ENCODE measurements at regions of chr3 and their contacts with region 1.

Region 1: DNA sequence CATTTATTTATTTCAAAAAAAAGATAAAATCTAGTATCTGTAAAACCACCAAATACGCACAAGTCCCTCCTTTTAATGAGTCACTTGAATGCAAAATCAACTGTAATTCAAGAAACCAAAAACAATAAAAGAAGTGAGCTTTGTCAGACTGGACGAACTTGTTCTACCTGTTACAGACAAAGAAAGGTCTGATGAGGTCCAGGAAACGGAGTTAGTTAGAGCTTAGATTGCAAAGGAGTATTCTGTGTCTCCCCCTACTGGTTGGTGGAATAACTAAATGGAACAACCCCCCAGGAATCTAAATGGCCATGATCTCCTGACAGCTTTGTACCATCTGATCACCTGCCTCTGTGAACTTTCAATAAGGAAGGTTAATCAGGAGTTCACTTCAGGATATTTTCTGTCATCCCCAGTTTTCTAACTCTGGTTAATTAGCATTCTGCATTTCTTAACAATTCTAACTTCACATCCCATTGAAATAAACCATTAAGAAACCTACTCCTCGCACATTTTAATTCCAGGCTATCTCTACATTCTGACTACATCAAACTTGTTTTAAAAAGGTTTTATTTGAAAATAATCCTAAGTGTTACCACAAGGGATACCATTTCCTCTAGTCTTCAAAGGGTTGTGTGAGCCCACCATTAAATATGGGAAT is 333.0 kb upstream of the SATB1 start:
- DNase-seq: peak; percentile 69
- ATAC-seq: peak; percentile 94
- H3K4me3 Mint-ChIP-seq: no peak overlapping the region
- H3K27ac Mint-ChIP-seq: peak overlapping the region; percentile 44
- H3K4me1 Mint-ChIP-seq: peaks cover 41% of the 10 kb centered on the region
- H3K27me3 Mint-ChIP-seq: no peaks in the 10 kb centered on the region

Region 2: DNA sequence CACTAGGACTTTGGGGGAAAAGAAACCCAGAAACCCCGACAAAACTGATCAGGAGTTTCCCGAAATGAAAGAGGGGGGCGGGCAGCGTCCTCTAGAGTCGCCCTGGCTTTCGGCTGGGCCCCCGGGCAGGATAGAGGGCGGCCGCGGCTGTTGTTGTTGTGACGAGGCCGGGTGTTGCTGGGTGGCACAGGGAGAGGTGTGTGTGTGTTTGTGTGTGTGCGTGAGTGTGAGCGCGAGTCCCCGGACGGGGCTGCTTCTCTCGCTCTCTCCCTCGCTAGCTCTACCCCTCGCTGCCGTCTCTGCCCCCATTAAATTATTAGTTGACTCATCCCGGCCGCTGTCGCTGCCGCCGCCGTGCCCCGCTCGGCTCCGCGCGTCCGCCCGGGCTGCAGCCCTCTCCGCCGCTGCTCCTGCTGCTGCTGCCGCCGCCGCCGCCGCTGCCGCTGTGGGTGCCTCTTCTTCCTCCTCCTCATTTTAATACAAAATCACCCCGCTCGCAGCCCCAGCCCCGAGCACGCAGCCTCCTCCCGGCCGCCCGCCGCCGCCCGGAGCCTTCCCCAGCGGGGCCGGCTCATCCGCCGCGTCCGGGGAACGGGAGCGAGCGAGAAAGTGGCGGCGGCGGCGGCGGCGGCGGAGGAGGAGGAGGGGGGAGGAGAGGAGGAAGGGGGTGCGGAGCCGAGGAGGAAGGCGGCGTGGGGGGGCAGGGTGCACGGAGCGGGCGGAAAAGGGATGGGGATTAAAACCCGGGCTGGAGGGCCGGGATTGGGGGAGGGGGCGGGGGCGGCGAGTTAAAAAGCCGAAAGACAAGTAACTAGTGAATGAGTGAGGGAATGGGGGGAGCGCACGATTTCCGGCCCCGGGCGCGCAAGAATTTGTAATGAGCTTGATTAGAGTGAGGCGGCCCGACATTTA is 333.2 kb before region 1 on chr3 and contains the start of gene SATB1:
- CTCF ChIA-PET with region 1: interaction called, 21 read pairs
- POLR2A ChIA-PET with region 1: no interaction called
- DNase-seq: peak; percentile 79
- ATAC-seq: peak; percentile 23
- H3K4me3 Mint-ChIP-seq: peak within 1 kb of the TSS; percentile 87
- H3K27ac Mint-ChIP-seq: peak within 1 kb of the TSS; percentile 88
- H3K4me1 Mint-ChIP-seq: peaks cover 60% of the 10 kb centered on the region
- H3K27me3 Mint-ChIP-seq: no peaks in the 10 kb centered on the region
- total RNA-seq, gene SATB1: 268 to 273 TPM

Region 3: DNA sequence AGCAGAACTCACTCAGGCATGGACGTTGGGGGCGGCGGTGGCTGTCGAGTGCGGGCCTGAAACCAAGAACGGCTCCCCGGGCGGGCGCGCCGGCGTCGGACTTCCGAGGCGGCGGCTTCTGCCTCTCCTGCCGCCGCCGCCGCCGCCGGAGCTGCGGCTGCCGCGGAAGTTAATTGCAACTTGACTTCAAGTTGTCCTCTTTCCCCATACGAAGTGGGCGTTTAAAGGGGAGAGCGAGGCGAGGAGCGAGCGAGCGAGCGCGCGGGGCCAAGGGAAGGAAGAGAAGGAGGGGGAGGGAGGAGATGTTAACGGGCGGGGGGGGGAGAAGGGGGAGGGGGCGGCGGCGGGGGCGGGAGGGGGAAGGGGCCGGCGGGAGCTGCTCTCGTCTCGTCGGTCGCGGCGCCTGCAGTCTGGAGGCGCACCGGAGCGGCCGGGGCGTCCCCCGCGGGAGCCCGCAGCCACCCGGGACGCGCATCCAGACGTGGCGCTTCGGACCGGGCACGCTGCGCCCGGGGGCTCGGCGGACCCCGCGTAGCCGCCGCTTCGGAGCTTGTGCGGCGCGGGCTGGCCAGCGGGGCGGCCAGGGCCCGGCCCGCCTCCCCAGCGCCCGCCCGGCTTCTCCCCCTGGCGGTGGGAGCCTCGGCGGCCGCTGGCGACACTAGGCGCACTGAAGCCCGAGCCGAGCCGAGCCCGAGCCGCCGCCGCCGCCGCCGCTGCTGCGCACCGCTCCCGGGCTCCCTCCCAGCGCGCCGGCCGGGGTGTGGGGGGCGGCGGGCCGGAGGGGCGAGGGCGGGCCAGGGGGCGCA is 313.4 kb before region 1 on chr3:
- CTCF ChIA-PET with region 1: interaction called, 43 read pairs
- POLR2A ChIA-PET with region 1: interaction called, 7 read pairs
- DNase-seq: peak; percentile 87
- ATAC-seq: peak; percentile 79
- H3K4me3 Mint-ChIP-seq: peak overlapping the region; percentile 93
- H3K27ac Mint-ChIP-seq: peak overlapping the region; percentile 95
- H3K4me1 Mint-ChIP-seq: peaks cover 45% of the 10 kb centered on the region
- H3K27me3 Mint-ChIP-seq: no peaks in the 10 kb centered on the region

Region 4: DNA sequence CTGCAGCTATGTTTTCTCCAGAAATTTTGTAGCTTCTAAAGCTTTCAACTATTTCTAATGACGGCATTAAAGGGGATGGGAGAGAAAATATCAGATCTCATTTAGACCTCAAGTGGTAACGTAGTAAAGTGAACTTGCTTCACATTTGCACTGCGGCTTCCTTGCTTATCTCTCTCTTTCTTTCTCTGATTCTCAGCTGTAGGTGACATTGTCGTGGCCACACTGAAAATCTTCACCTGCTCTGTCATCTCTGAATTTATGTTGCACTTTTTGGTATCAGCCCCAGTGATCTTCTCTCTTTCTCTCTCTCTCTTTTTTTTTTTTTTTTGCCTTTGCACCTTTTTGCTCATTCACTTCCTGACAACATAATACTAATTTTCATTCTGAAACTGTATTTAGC is 78.9 kb before region 1 on chr3:
- CTCF ChIA-PET with region 1: interaction called, 15 read pairs
- POLR2A ChIA-PET with region 1: no interaction called
- DNase-seq: peak; percentile 66
- ATAC-seq: peak; percentile 80
- H3K4me3 Mint-ChIP-seq: peak overlapping the region; percentile 56
- H3K27ac Mint-ChIP-seq: peak overlapping the region; percentile 87
- H3K4me1 Mint-ChIP-seq: peaks cover 68% of the 10 kb centered on the region
- H3K27me3 Mint-ChIP-seq: no peaks in the 10 kb centered on the region

Region 5: DNA sequence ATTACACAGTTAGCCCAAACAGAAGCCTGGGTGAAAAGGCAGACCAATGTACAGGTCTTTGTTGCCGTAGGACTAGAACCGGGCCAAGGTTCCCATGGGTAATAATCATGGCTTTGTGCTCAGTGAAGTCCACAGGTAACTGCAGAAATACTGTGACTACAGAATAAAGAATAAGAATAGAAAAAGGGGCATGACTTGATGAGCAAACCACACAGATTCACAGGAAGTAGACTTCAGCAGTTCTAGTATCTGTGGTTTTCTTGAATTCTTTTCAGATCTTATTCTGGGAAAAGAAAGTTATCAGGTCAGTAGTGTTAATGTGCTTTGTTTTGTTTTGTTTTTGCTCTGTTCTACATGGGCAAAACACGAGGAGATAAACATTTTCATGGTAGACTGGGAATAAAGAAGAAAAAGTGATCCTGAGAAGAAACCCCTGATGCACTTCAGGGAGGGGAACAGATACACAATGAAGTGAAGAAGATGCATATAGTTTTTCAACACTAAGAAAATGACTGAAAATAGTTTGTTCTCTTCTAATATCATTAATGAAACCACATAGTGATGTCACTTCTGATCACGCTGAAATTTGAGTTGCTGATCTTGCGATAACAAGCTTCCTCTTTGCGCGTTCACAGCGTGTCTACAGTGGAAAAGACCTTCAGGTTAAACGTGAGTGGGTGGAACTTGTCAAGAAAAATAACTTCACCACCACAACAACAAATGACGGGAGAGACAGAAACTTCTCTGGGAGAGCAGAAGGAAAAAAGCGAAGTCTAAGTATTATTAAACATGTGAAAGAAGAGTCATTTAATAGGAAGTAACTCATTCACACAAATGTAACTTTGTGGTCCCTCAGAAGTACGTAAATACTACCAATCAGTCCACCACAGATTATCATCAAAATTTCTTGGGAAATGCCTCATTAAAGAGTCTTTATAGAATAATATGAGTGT is 17.3 kb before region 1 on chr3:
- CTCF ChIA-PET with region 1: interaction called, 67 read pairs
- POLR2A ChIA-PET with region 1: interaction called, 9 read pairs
- DNase-seq: peak; percentile 72
- ATAC-seq: peak; percentile 72
- H3K4me3 Mint-ChIP-seq: peak overlapping the region; percentile 76
- H3K27ac Mint-ChIP-seq: peak overlapping the region; percentile 92
- H3K4me1 Mint-ChIP-seq: peaks cover 87% of the 10 kb centered on the region
- H3K27me3 Mint-ChIP-seq: no peaks in the 10 kb centered on the region

Region 6: DNA sequence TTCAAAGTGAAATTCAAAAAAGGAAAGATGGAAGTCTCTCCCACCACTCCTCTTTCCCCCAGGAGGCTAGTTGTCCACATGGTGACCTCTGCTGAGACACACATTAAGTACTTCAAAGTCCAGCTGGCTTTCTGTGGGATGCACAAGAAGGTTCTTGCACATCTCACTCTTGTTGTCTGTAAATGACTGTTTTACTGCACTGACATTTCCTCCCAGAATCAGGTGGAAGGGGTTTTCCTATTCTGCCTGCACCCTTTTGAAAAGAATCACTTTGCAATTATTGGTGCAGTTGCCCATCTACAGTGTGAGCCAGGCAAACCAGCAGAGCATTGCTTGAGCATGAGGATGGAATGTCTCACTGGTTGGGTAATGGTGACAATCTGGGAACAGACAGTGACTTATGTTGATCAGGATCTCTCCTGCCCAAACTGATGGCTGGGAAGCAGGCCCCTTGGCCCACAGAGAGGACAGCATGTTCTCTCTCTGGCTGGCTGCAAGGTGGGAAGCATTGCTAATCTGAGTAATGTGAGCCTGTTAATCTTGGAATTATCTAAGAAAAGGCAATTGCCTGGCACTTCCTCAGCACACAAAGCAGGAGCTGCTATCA is 14.6 kb after region 1 on chr3:
- CTCF ChIA-PET with region 1: interaction called, 31 read pairs
- POLR2A ChIA-PET with region 1: no interaction called
- DNase-seq: no peak
- ATAC-seq: no peak
- H3K4me3 Mint-ChIP-seq: no peak overlapping the region
- H3K27ac Mint-ChIP-seq: no peak overlapping the region
- H3K4me1 Mint-ChIP-seq: peaks cover 36% of the 10 kb centered on the region
- H3K27me3 Mint-ChIP-seq: no peaks in the 10 kb centered on the region

Region 7: DNA sequence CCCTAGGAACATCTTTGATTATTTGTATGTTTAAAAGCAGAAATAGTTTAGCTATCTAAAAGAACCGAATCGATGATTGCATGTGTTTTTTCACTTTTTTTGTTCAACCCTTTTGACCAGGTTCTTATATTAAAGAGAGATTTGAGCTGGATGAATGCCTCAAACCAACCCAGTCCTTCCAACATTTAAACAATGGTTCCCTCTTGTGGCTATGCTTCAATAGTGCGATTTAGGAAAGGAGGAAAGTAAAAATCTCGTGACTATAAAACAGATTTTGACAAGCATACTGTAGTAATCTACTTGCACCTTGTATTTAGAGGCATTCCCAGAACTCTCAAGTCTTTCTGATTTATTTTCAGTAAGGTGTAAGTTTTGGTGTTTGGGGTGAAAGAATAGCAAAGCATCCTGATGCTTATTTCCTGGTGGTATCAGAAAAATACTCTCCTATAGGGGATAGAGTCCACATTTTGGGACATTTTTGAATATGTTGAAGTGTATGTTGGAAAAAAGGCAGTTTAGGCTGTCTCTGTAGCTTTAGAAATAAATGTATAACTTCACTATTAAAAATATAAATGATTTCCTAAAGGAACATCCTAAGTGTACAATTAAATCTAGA is 230.5 kb after region 1 on chr3:
- CTCF ChIA-PET with region 1: interaction called, 19 read pairs
- POLR2A ChIA-PET with region 1: no interaction called
- DNase-seq: no peak
- ATAC-seq: peak; percentile 64
- H3K4me3 Mint-ChIP-seq: peak overlapping the region; percentile 44
- H3K27ac Mint-ChIP-seq: no peak overlapping the region
- H3K4me1 Mint-ChIP-seq: peaks cover 19% of the 10 kb centered on the region
- H3K27me3 Mint-ChIP-seq: peaks cover 9% of the 10 kb centered on the region

Measured in activated CD8-positive, alpha-beta T cell treated with anti-CD3 and anti-CD28 coated beads, Interleukin-2, amount 10 ng/mL, durations not matched to agents 7 days and 5 days (primary cell).